GM12878 (cell line): ENCODE measurements at regions of chrX and their contacts with region 1.

Region 1: DNA sequence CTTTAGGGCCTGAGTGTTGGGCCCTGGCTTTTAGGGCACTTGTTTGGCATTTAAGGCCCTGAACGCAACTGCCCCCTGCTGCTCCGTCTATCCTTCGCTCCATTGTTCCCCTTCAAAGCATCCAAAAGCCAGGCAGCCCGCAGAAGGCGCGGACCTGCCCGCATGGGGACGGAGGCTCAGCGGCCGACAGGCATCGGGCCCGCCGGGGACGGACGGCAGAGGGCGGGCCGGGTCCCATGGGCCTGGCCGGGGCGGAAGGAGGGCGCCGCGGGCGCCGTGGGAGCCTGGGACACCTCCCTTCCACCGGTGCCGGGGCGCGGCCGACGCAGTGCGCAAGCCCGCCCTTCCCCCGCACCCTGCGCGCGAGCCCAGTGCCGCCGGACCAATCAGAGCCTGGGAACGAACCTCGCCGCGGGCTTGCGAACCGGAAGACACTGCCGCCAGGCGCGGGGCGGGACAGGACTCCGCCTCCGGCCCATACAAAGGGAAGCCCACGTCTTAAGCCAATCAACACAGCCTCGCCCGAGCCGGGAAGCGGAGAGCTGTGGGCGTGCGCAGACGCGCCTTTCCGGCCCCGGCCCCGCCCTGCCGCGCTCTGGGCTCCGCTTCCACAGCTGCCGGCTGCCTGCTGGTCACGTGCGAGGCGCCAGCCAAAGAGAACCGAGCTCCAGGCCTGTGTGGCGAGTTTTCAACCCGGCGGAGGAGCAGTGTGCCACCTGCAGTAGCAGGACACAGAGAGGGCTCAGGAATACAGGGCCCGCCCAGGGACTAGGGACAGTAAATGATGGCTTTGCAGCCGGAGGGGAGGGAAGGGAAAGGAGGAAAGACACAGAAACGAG is 2.1 kb upstream of the ARHGAP4 start:
- DNase-seq: peak; percentile 91
- ATAC-seq: peak; percentile 78
- H3K4me3 ChIP-seq: peak overlapping the region; percentile 74
- H3K27ac ChIP-seq: peak overlapping the region; percentile 98
- H3K4me1 ChIP-seq: peaks cover 9% of the 10 kb centered on the region; the same call in 1 of the 2 replicates
- H3K27me3 ChIP-seq: no peaks in the 10 kb centered on the region
- CTCF ChIP-seq: 0 out of 6 replicates have a peak, but pooled peaks of 2 of the 3 experiments have one; percentile 3 to 7
- EP300 ChIP-seq: no peak
- POLR2A ChIP-seq: peak; percentile 74; the same call in 1 of the 2 replicates
- RAD21 ChIP-seq: no peak

Region 2: GRCh38 chrX:153724252-153725040 is 203.7 kb before region 1 on chrX and contains the starts of genes ABCD1 and BCAP31:
- CTCF ChIA-PET with region 1: interaction called, 3 read pairs
- POLR2A ChIA-PET with region 1: interaction called, 6 read pairs
- RAD21 ChIA-PET with region 1: no interaction called
- SMC1A ChIA-PET with region 1: no interaction called
- in situ Hi-C with region 1: no loop called
- intact Hi-C with region 1: loop called (anchors 5 kb)
- DNase-seq: peak; percentile 32
- ATAC-seq: peak; percentile 77
- H3K4me3 ChIP-seq: peak within 1 kb of the TSS; percentile 70
- H3K27ac ChIP-seq: peak within 1 kb of the TSS; percentile 64
- H3K4me1 ChIP-seq: peaks cover 30% of the 10 kb centered on the region
- H3K27me3 ChIP-seq: no peaks in the 10 kb centered on the region
- CTCF ChIP-seq: no peak
- EP300 ChIP-seq: no peak
- POLR2A ChIP-seq: peak; percentile 88
- RAD21 ChIP-seq: no peak
- polyA plus RNA-seq, gene ABCD1: 0.13 to 0.35 TPM
- polyA plus RNA-seq, gene BCAP31: 201 to 246 TPM

Region 3: DNA sequence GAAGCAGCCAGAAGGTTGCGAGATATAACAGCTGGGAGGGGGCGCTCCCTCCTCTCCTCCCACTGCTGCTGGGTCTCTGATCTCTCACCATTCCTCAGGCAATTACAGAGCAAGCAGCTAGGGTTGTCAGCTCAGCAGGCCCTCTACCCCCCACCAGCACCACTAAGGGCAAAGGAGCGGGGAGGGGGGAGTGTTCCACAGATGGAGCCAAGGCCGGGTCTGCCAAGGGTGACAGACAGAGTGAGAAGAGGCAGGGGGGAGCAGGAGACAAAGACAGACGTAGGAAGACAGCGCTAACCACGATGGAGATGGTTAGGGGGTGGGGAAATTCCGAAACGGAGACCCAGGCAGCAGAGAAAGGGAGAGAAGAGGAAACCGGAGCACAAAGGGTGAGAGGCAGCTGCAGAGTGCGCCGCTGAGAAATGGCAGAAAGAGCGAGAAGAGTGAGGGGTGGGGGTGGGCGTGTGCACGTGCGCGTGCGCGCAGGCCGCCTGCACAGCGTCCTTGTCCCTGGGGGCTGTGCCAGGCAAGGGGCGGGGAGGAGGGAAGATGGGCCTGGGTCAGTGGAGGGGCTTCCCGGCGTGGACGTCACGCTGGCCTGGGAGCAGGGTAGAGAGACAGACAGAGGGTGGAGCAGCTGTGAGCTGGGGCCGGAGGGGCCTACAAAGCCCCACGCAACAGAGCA is 49.0 kb before region 1 on chrX:
- CTCF ChIA-PET with region 1: interaction called, 11 read pairs
- POLR2A ChIA-PET with region 1: interaction called, 5 read pairs
- RAD21 ChIA-PET with region 1: interaction called, 5 read pairs
- SMC1A ChIA-PET with region 1: no interaction called
- in situ Hi-C with region 1: no loop called
- intact Hi-C with region 1: no loop called
- DNase-seq: no peak
- ATAC-seq: peak; percentile 43
- H3K4me3 ChIP-seq: no peak overlapping the region
- H3K27ac ChIP-seq: no peak overlapping the region
- H3K4me1 ChIP-seq: no peaks in the 10 kb centered on the region; the same call in 1 of the 2 replicates
- H3K27me3 ChIP-seq: peaks cover 0 to 1% of the 10 kb centered on the region in 2 experiments; a peak in 2 of 4 replicates
- CTCF ChIP-seq: no peak
- EP300 ChIP-seq: no peak; a peak in 1 of 4 replicates
- POLR2A ChIP-seq: no peak
- RAD21 ChIP-seq: no peak

Region 4: DNA sequence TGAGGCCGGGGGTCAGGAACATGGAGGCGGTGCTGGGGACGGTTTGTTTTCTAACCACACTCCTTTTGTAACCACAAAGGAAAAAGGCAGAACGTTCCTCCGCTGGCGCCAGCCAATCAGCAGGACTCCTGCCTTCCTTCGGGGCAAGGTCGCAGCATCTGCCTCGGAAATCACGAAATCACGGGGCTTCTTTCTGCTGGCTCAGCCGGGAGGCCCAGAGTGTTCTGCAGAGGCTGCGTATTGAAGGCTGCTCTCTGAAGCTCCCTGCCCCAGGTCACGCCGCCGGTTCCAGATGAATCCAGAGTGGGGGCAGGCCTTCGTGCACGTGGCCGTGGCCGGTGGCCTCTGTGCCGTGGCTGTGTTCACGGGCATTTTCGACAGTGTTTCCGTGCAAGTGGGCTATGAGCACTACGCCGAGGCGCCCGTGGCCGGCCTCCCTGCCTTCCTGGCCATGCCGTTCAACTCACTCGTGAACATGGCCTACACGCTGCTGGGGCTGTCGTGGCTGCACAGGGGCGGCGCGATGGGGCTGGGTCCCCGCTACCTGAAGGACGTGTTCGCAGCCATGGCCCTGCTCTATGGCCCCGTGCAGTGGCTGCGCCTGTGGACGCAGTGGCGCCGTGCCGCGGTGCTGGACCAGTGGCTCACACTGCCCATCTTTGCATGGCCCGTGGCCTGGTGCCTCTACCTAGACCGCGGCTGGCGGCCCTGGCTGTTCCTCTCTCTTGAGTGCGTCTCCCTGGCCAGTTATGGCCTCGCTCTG is 53.8 kb after region 1 on chrX:
- CTCF ChIA-PET with region 1: interaction called, 3 read pairs
- POLR2A ChIA-PET with region 1: interaction called, 4 read pairs
- RAD21 ChIA-PET with region 1: interaction called, 4 read pairs
- SMC1A ChIA-PET with region 1: no interaction called
- in situ Hi-C with region 1: loop called (anchors 10 kb)
- intact Hi-C with region 1: no loop called
- DNase-seq: no peak
- ATAC-seq: no peak
- H3K4me3 ChIP-seq: no peak overlapping the region
- H3K27ac ChIP-seq: peak overlapping the region; percentile 60
- H3K4me1 ChIP-seq: peaks cover 39% of the 10 kb centered on the region
- H3K27me3 ChIP-seq: no peaks in the 10 kb centered on the region
- CTCF ChIP-seq: no peak
- EP300 ChIP-seq: no peak
- POLR2A ChIP-seq: peak; percentile 29; the same call in 1 of the 2 replicates
- RAD21 ChIP-seq: no peak

Region 5: DNA sequence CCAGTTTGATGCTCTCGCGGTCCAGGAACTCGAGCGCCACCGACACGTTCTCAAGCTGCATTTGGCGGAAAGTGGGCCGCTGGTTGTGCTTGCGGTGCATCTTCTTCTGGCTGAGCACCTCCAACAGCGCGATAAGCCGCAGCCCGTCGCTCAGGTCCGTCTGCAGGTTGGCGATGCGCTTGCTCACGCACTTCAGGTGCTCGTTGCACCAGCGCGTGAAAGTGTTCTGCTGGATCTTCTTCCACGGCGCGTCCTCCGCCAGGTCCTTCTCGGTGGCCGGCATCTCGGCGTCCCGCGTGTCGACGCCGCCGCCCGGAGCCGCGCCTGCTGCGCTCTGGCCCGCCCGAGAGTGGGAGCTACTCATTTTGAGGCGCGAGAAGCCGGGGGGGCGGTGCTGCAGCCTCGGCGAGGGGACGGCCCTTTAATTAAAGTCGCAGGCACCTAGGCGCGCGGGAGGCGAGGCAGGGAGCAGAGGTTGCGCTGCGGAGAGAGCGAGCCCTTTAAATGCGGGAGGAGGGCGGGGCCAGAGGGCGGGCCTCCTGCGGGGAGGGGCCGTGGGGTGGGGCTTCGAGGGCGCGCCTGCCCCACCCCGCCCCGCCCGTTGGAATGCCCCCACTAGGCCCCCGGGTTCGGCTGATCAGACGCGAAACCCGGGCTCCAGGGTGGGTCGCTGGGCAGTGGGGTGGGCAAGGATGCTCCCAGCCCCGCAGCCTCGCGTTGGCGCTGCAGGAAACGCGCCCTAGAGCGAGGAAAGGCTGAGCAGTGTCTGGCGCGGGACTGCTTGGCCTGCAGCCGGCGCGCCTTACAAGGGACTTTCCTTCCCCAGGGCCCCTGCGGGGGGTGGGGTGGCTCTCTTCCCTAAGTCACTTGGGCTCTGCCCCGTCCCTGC is 443.0 kb after region 1 on chrX:
- CTCF ChIA-PET with region 1: no interaction called
- POLR2A ChIA-PET with region 1: no interaction called
- RAD21 ChIA-PET with region 1: no interaction called
- SMC1A ChIA-PET with region 1: no interaction called
- in situ Hi-C with region 1: loop called (anchors 5 kb)
- intact Hi-C with region 1: loop called (anchors 5 kb)
- DNase-seq: peak; percentile 53
- ATAC-seq: peak; percentile 66
- H3K4me3 ChIP-seq: peak overlapping the region; percentile 88
- H3K27ac ChIP-seq: peak overlapping the region; percentile 58
- H3K4me1 ChIP-seq: peaks cover 11% of the 10 kb centered on the region
- H3K27me3 ChIP-seq: no peaks in the 10 kb centered on the region
- CTCF ChIP-seq: peak in 1 of 3 experiments; percentile 19; a peak in 1 of 6 replicates
- EP300 ChIP-seq: no peak
- POLR2A ChIP-seq: peak; percentile 99
- RAD21 ChIP-seq: no peak

Region 6: DNA sequence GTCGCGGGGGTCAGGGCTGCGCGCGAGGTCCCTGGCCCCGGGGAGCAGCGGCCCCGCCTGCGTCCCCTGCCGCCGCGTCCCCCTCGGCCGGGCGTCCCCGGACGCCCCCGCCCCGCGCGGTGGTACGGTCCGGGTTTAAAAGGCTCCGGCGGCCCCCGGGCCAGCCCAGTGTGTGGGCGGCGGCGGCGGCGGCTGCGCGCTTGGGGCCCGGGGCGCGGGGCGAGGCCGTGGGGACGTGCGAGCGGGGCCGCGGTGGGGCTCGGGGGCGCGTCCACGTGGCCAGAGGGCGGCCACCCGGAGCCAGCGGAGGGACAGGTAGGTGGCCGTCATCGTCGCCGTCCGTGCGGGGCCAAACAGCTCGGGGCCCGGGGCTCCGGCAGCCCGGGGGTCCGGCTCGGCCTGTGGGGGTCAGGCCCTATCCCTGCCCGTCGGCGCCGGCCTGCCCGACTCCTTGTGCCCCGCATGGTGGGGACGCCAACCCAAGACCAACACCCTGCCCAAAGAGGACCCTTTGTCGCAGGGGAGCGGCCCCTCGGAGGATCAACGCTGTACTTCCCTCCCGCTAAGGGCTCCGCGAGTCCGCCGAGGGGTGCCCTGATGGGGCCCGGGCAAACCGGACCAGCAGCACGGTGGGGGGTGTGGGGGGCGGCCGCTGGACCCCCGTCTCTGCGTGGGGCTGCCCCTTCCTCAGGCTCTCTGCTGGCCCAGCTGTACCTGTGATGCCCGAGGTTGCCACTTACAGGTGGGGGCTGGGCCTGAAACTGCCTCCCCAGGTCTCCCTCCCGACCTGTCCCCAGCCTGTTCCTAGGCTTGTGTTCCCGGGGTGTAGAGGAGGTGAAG is 530.2 kb after region 1 on chrX and contains the start of gene PLXNA3:
- CTCF ChIA-PET with region 1: no interaction called
- POLR2A ChIA-PET with region 1: no interaction called
- RAD21 ChIA-PET with region 1: no interaction called
- SMC1A ChIA-PET with region 1: no interaction called
- in situ Hi-C with region 1: no loop called
- intact Hi-C with region 1: no loop called
- DNase-seq: no peak
- ATAC-seq: peak; percentile 76
- H3K4me3 ChIP-seq: peak within 1 kb of the TSS; percentile 77
- H3K27ac ChIP-seq: peak within 1 kb of the TSS; percentile 61
- H3K4me1 ChIP-seq: no peaks in the 10 kb centered on the region
- H3K27me3 ChIP-seq: no peaks in the 10 kb centered on the region
- CTCF ChIP-seq: no peak
- EP300 ChIP-seq: no peak
- POLR2A ChIP-seq: peak; percentile 81
- RAD21 ChIP-seq: no peak
- polyA plus RNA-seq, gene PLXNA3: 0.26 to 0.32 TPM